PC-9 (cell line): ENCODE measurements at regions of chr3 and their contacts with region 1.

Region 1: GRCh38 chr3:146218880-146219866 is 31.7 kb downstream of the PLSCR4 start:
- DNase-seq: peak in 1 of 2 experiments; percentile 18
- H3K4me3 ChIP-seq: no peak overlapping the region
- H3K27ac ChIP-seq: no peak overlapping the region
- H3K4me1 ChIP-seq: 0 out of 2 replicates have a peak, but pooled peaks cover 6% of the 10 kb centered on the region
- H3K27me3 ChIP-seq: no peaks in the 10 kb centered on the region
- CTCF ChIP-seq: peak; percentile 85

Region 2: GRCh38 chr3:146387566-146387965 is 168.4 kb after region 1 on chr3:
- CTCF ChIA-PET with region 1: no interaction called
- POLR2A ChIA-PET with region 1: no interaction called
- intact Hi-C with region 1: loop called (anchors 5 kb)
- DNase-seq: no peak
- H3K4me3 ChIP-seq: no peak overlapping the region
- H3K27ac ChIP-seq: no peak overlapping the region
- H3K4me1 ChIP-seq: no peaks in the 10 kb centered on the region
- H3K27me3 ChIP-seq: no peaks in the 10 kb centered on the region
- CTCF ChIP-seq: no peak